ENCODE measurements at regions of chr5 and their contacts with region 1.

Region 1: DNA sequence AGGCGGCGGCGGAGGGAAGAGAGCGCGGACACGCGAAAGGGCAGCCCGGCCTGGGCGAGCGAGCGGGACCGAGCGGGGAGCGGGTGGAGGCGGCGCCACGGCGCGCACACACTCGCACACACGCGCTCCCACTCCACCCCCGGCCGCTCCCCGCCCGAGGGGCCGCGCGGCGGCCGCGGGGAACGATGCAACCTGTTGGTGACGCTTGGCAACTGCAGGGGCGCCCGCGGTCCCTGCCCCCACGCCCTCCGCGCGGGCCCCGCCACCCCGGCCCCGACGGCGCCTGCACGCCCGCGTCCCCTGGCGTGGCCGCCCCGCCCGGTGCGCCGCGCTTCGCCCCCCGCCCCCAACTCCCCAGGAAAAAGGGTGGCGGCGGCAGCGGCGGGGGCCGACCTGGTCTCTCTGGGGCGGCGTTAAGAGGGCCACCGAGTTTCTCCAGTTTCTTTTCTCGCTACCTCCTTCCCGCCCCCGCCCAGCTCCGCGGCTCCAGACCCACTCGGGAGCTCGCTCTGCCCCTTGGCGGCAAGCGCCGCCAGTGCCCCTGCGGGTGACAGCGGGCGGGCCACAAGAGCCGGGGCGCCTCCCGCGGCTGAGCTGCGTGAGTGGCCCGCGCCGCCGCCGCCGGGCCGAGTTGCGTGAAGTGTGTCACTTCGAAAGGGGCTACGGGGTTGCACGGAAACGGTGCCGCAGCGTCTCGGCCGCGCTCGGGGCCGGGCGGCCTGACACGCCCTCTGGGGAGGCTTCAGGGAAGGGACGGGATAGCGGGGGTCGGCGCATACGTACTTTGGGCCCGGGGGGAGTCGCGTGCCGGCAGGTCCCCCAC is at the start of gene NR3C1:
- DNase-seq: peak; percentile 95
- total RNA-seq, gene NR3C1: 68.5 TPM

Region 2: DNA sequence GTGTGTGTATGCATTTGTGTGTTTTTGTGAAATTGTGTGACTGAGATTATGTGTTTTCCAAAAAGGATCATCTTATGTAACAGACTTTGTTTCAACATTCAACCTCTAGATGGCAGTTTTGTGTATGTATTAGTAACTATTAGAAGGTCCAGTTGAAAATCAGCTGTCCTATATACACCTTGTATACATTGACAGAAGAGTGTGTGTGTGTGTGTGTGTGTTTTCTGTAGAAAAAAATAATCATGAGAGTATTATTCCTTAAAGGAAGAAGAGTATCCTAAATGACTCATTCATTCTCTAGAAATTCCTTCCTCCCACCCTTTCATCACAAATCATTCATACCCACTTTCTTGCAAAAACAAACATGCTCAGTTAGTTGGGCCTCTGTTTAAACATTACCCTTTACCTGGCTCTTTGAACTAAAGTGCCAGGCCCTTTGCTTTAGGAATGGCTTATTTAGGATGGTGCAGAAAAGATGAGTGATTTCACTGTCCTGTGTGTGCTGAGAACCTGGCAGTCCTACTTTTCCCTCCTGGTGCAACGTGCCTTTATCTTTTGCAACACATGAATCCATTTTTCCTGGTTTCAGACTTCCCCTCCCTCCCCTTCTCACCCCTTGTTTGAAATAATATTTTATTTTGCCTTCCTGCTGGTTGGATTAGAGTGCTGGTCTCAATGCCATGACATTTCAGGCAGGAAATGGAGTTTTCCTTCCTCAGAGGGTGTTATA is 481.4 kb before region 1 on chr5:
- intact Hi-C with region 1: loop called (anchors 5 kb)
- DNase-seq: no peak

Region 3: GRCh38 chr5:143023411-143024096 is 380.2 kb before region 1 on chr5:
- intact Hi-C with region 1: loop called (anchors 5 kb)
- DNase-seq: peak; percentile 87

Region 4: DNA sequence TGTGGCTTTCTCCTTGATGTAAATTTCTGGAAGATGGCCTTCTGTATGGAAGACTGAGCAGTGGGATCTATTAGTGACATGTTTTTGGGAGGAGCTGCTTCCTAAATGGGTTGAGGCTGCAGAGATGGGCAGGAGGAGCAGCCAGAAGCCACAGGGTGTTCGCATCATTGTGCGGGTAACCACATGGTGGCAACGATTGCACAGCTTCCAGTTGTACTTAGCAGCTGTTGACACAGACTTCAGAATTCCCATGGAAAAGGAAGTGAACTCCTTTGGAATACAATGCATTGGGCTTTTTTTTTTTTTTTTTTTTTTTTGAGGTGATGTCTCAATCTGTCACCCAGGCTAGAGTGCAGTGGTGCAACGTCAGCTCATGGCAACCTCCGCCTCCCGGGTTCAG is 297.6 kb before region 1 on chr5:
- intact Hi-C with region 1: loop called (anchors 2 kb)
- DNase-seq: no peak

Region 5: GRCh38 chr5:143733665-143734455 is 330.1 kb after region 1 on chr5:
- intact Hi-C with region 1: no loop called
- DNase-seq: no peak

Region 6: GRCh38 chr5:144142139-144142823 is 738.5 kb after region 1 on chr5:
- intact Hi-C with region 1: loop called (anchors 10 kb)
- DNase-seq: no peak

Measured in cardiac septum (tissue), 1 donor.